WTC11 (cell line): ENCODE measurements at regions of chr1 and their contacts with region 1.

Region 1: DNA sequence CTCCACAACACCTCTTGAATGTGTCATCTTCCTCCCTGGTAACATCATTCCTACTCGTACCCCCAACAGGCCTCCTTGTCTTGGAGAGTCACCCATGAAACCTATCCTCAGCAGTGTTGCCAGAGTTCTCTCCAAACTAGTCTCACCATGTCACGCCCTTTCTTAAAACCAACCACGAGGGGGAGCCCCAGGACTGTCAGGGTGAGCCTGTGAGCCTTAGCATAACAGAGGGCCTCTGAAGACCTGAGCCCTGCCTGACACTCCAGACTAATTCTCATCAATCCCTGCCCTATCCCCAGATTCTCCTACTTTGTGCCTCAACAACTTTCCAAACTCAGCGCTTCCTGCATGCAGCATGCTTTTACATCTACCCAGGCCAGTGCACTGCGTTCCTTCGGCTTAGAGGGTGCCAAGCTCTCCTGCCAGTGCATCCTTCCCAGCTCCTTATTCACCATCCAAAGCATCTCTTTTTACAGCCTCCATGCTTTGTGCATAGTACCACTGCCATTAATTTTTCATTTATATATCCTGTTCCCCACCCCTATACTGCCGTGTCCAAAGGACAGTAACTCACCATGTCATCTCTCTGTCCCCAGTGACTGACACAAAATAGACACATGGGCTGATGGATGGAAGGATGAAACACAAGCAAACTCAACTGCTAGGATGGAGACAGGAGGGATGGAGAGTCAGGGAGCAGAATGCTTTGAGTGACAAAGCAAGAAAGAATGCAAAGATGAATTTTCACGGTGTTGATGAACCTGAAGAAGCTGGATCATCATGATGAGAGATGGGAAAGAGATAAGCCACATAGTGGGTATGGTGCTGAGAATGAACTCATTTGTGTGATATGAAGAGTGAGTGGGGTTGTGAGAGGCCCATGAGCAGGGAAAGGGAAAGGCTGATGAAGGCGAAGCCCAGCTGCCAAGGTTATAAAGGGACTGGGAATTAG is 34.0 kb downstream of the ZNF697 start:
- DNase-seq: peak; percentile 92
- ATAC-seq: peak; percentile 85
- H3K4me3 Mint-ChIP-seq: no peak overlapping the region
- H3K27ac Mint-ChIP-seq: no peak overlapping the region
- H3K4me1 Mint-ChIP-seq: peaks cover 23% of the 10 kb centered on the region
- H3K27me3 Mint-ChIP-seq: peaks cover 4% of the 10 kb centered on the region
- CTCF ChIP-seq: peak; percentile 73

Region 2: DNA sequence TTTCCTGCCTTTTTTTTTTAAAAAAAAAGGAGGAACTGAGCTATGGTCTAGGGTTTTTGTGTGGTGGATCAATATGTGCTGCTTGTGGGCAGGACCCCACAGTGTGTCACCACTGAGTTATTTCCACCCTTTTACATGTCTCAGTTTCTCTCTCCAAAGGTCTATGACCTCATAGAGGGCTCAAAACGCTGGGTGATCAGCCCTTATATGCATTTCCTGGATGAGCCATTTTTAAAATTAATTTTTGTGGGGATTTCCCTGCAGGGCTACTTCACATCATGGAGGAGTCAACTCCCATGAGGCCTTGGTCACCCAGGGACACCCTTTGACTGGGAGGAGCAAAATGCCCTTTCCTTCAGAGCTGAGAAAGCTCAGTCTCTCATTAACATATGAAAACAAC is 266.2 kb before region 1 on chr1:
- CTCF ChIA-PET with region 1: no interaction called
- POLR2A ChIA-PET with region 1: no interaction called
- DNase-seq: no peak
- ATAC-seq: peak; percentile 81
- H3K4me3 Mint-ChIP-seq: no peak overlapping the region
- H3K27ac Mint-ChIP-seq: peak overlapping the region; percentile 88
- H3K4me1 Mint-ChIP-seq: peaks cover 34% of the 10 kb centered on the region
- H3K27me3 Mint-ChIP-seq: no peaks in the 10 kb centered on the region; the same call in 1 of the 2 replicates
- CTCF ChIP-seq: no peak

Region 3: GRCh38 chr1:119372490-119373086 is 241.5 kb before region 1 on chr1:
- CTCF ChIA-PET with region 1: interaction called, 10 read pairs
- POLR2A ChIA-PET with region 1: no interaction called
- DNase-seq: peak; percentile 69
- ATAC-seq: peak; percentile 93
- H3K4me3 Mint-ChIP-seq: no peak overlapping the region
- H3K27ac Mint-ChIP-seq: peak overlapping the region; percentile 3; the same call in 1 of the 2 replicates
- H3K4me1 Mint-ChIP-seq: peaks cover 36% of the 10 kb centered on the region
- H3K27me3 Mint-ChIP-seq: peaks cover 3% of the 10 kb centered on the region; the same call in 1 of the 2 replicates
- CTCF ChIP-seq: no peak

Region 4: GRCh38 chr1:119631433-119632102 is 17.5 kb after region 1 on chr1:
- CTCF ChIA-PET with region 1: interaction called, 10 read pairs
- POLR2A ChIA-PET with region 1: no interaction called
- DNase-seq: peak; percentile 61
- ATAC-seq: peak; percentile 87
- H3K4me3 Mint-ChIP-seq: peak overlapping the region; percentile 26
- H3K27ac Mint-ChIP-seq: no peak overlapping the region
- H3K4me1 Mint-ChIP-seq: peaks cover 34% of the 10 kb centered on the region
- H3K27me3 Mint-ChIP-seq: no peaks in the 10 kb centered on the region
- CTCF ChIP-seq: no peak

Region 5: DNA sequence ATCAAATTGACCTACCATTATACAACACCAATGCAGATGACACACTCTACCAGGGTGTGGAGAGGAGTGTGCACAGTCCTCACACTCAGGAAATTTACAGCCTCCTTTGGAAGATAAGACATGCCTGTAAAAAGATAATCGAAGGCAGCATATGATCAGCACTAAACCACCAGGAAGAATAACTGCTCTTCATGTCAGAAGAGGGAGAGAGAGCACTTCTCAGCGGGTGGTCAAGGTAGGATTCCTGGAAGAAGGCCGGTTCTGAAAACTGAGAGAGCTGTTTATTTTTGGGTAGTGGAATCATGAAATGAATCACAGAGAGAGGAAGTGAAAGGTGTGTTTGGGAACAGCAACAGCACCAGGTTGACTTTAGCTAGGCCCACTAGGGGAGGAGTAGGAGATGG is 48.0 kb after region 1 on chr1:
- CTCF ChIA-PET with region 1: interaction called, 57 read pairs
- POLR2A ChIA-PET with region 1: no interaction called
- DNase-seq: no peak
- ATAC-seq: no peak
- H3K4me3 Mint-ChIP-seq: no peak overlapping the region
- H3K27ac Mint-ChIP-seq: no peak overlapping the region; the same call in 1 of the 2 replicates
- H3K4me1 Mint-ChIP-seq: peaks cover 29% of the 10 kb centered on the region
- H3K27me3 Mint-ChIP-seq: no peaks in the 10 kb centered on the region
- CTCF ChIP-seq: no peak

Region 6: GRCh38 chr1:119667173-119667572 is 53.1 kb after region 1 on chr1:
- CTCF ChIA-PET with region 1: interaction called, 57 read pairs
- POLR2A ChIA-PET with region 1: no interaction called
- DNase-seq: no peak
- ATAC-seq: no peak
- H3K4me3 Mint-ChIP-seq: no peak overlapping the region
- H3K27ac Mint-ChIP-seq: no peak overlapping the region
- H3K4me1 Mint-ChIP-seq: peaks cover 8% of the 10 kb centered on the region
- H3K27me3 Mint-ChIP-seq: no peaks in the 10 kb centered on the region
- CTCF ChIP-seq: no peak

Region 7: DNA sequence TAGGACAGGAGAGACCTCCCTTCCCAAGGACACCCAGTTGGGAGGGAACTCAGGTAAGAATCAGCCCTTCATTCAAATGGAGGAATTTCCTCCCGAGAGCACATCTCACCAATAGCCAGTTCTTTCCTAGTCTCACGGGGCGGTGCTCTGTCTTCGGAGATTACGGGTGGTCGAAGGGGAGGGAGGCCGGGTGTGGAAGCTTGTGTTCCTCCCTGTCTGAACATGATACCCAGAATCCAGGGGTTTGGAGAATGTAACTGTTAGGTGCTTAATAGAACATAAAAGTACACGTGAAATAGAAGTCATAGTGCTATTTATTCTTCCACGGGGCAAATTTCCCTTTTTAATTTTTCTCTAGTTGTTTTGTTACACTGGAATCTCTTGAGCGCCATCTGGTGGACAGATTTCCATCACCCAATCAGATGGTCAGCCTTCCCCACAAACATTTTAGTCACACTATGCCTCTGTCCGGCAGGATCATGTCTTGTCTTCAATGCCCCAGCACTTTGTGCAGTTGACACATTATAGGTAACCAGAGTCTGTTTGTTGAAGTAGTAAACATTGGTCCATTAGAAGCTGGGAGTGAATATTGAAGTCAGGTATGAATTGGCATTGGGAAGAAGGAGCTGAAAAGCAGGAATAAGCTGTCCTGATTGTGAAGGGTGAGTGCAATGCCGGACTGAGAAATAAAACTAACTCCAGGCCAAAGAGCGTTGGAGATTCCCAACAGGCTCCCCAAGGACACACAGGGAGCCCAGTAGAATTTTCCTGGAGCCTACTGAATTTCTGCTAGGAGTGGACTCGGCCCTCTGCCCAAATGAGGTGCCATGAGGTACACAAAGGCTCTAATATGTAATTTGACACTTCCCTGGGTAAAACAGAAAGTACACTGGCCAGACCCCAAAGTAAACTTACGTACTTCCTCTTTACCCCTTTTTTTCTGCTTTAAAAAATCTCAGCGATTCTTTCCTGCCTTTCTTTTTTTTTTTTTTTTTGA is 61.6 kb after region 1 on chr1:
- CTCF ChIA-PET with region 1: interaction called, 55 read pairs
- POLR2A ChIA-PET with region 1: interaction called, 3 read pairs
- DNase-seq: peak; percentile 84
- ATAC-seq: peak; percentile 88
- H3K4me3 Mint-ChIP-seq: peak overlapping the region; percentile 68
- H3K27ac Mint-ChIP-seq: peak overlapping the region; percentile 96
- H3K4me1 Mint-ChIP-seq: peaks cover 55% of the 10 kb centered on the region
- H3K27me3 Mint-ChIP-seq: no peaks in the 10 kb centered on the region
- CTCF ChIP-seq: peak; percentile 72

Region 8: GRCh38 chr1:119711804-119712341 is 97.8 kb after region 1 on chr1 and contains the start of gene PHGDH:
- CTCF ChIA-PET with region 1: interaction called, 20 read pairs
- POLR2A ChIA-PET with region 1: interaction called, 3 read pairs
- DNase-seq: peak; percentile 78
- ATAC-seq: peak; percentile 73
- H3K4me3 Mint-ChIP-seq: peak within 1 kb of the TSS; percentile 98
- H3K27ac Mint-ChIP-seq: peak within 1 kb of the TSS; percentile 99
- H3K4me1 Mint-ChIP-seq: peaks cover 44% of the 10 kb centered on the region
- H3K27me3 Mint-ChIP-seq: no peaks in the 10 kb centered on the region; the same call in 1 of the 2 replicates
- CTCF ChIP-seq: no peak
- total RNA-seq, gene PHGDH: 592 to 630 TPM (median 618 TPM) in 3 replicates